CD14-positive monocyte (primary cell): ENCODE measurements at regions of chr7 and their contacts with region 1.

Region 1: DNA sequence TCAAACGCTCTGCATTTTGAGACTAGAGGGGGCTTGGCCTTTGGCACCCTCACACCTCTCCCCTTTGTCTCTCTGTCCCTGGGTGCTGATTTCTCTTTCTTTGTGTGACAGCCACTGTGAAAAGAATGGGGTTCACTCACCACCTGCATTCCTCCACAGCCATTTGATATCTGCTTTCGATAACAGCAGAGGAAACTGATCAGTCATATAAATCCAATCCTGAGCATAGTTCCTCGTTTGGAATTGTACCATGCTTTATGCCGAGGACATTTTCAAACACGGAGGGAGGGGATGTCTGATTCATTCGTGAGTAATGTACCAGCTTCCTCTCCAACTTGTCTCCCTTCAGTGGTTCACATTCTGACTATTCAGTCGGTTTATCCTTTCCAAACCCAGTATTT is 15.8 kb downstream of the MET start:
- DNase-seq: peak; percentile 25 to 70 (median 39)
- H3K4me3 ChIP-seq: no peak overlapping the region
- H3K4me3 Mint-ChIP-seq: no peak overlapping the region
- H3K27ac ChIP-seq: no peak overlapping the region
- H3K27ac Mint-ChIP-seq: peak overlapping the region in 1 of 7 donors; percentile 33
- H3K4me1 ChIP-seq: no peaks in the 10 kb centered on the region
- H3K4me1 Mint-ChIP-seq: peaks cover 25% of the 10 kb centered on the region
- H3K27me3 ChIP-seq: peaks cover 0 to 2% of the 10 kb centered on the region in 2 donors
- H3K27me3 Mint-ChIP-seq: peaks cover 7 to 11% (median 11%) of the 10 kb centered on the region in 3 donors
- CTCF ChIP-seq: no peak

Region 2: DNA sequence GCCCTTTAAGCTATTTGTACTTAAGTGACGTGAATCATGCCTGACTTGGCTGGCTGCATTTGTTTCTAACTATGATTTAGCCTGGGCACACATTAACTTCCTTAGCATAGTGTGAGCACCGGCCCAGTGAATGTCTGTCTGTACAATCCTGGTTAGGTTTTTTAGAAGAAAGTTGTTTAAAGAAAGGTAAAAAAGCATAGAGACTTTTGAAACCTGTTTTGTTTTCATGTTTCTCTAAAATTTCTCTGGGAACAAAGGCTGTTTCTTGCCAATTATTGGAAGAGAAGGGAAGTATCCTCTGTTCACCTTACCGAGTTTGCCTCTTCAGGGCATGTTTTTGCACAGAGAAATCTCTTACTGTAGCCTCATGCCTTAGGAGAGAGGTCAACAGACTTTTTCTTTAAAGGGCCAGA is 58.7 kb before region 1 on chr7:
- intact Hi-C with region 1: loop called in 1 of 2 experiments (anchors 5 kb)
- DNase-seq: no peak
- H3K4me3 ChIP-seq: no peak overlapping the region
- H3K4me3 Mint-ChIP-seq: no peak overlapping the region
- H3K27ac ChIP-seq: no peak overlapping the region
- H3K27ac Mint-ChIP-seq: no peak overlapping the region
- H3K4me1 ChIP-seq: peaks cover 9 to 13% of the 10 kb centered on the region in 2 donors
- H3K4me1 Mint-ChIP-seq: peaks cover 20% of the 10 kb centered on the region
- H3K27me3 ChIP-seq: peaks cover 2 to 4% of the 10 kb centered on the region in 2 donors
- H3K27me3 Mint-ChIP-seq: peaks cover 0 to 12% (median 5%) of the 10 kb centered on the region in 3 donors
- CTCF ChIP-seq: no peak

Region 3: DNA sequence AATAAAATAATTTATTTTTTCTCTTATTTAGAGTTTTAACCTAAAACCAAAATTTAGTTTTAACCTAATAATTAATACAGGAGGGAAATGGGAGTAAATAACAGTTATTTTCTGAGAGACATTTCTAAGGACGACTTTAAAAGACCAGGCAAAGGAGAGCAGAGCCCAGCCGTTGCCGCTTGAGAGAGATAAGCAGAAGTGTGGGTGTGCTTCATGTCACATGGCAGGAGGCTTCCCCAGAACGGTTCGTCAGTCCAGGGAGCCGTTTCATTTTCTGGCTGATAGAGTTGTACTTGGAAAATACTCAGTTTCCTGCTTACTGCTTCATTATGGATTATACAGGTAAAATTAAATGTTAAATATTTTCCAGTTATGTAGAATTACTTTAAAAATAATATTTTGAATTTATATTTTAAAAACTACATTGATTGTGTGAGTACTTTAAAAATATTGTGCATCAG is 326.9 kb after region 1 on chr7:
- intact Hi-C with region 1: no loop called
- DNase-seq: peak; percentile 28 to 53 (median 49)
- H3K4me3 ChIP-seq: peak overlapping the region in 1 of 3 experiments; percentile 23
- H3K4me3 Mint-ChIP-seq: peak overlapping the region in 1 of 2 donors; percentile 65
- H3K27ac ChIP-seq: no peak overlapping the region
- H3K27ac Mint-ChIP-seq: no peak overlapping the region
- H3K4me1 ChIP-seq: peaks cover 10 to 16% of the 10 kb centered on the region in 2 donors
- H3K4me1 Mint-ChIP-seq: peaks cover 46% of the 10 kb centered on the region
- H3K27me3 ChIP-seq: peaks cover 0 to 2% of the 10 kb centered on the region in 2 donors
- H3K27me3 Mint-ChIP-seq: peaks cover 2 to 9% (median 5%) of the 10 kb centered on the region in 3 donors
- CTCF ChIP-seq: no peak